Natural killer cell (primary cell): ENCODE measurements at regions of chr2 and their contacts with region 1.

Region 1: DNA sequence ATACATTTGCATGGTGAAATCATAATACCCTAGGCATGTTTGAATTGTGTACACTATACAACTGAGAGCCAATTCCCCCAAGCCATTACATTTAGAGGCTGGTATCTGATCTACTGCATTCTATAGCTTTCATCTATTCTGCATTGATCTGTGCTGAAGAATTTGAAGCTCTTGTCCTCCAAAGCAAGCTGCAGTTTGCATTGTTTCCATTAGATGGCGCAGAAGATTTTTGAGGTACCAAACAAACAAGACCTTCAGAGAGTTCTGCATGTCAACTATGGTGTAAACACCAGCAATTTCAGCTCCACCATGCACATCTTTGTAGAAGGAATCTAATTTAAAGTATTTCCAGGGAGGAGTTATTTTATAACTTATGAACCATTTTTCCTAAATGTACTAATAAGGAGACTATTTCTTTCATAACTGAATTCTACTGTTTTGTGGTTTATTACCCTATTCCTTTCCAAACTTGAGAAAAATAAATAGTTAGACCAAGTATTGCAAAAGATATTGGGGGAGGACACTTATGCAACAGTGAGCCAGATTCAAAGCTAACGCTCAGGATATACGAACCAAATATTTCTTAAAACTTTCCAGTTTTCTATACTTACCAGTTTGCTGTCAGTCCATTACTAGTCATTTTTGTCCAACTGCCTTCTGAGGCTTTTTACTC is 761.8 kb upstream of the ACVR2A start:
- DNase-seq: peak; percentile 17 to 73
- ATAC-seq: peak; percentile 49 to 54 (median 52)
- H3K4me3 ChIP-seq: no peak overlapping the region
- H3K4me3 Mint-ChIP-seq: no peak overlapping the region
- H3K27ac ChIP-seq: no peak overlapping the region
- H3K27ac Mint-ChIP-seq: no peak overlapping the region
- H3K4me1 ChIP-seq: no peaks in the 10 kb centered on the region
- H3K4me1 Mint-ChIP-seq: no peaks in the 10 kb centered on the region
- H3K27me3 ChIP-seq: peaks cover 2% of the 10 kb centered on the region
- H3K27me3 Mint-ChIP-seq: peaks cover 6 to 34% of the 10 kb centered on the region in 2 donors
- CTCF ChIP-seq: peak; percentile 85

Region 2: GRCh38 chr2:147331790-147332419 is 248.9 kb after region 1 on chr2:
- intact Hi-C with region 1: loop called (anchors 2 kb)
- DNase-seq: peak in 1 of 2 donors; percentile 65
- ATAC-seq: no peak
- H3K4me3 ChIP-seq: no peak overlapping the region
- H3K4me3 Mint-ChIP-seq: no peak overlapping the region
- H3K27ac ChIP-seq: no peak overlapping the region
- H3K27ac Mint-ChIP-seq: no peak overlapping the region
- H3K4me1 ChIP-seq: no peaks in the 10 kb centered on the region
- H3K4me1 Mint-ChIP-seq: peaks cover 10 to 11% of the 10 kb centered on the region in 2 donors
- H3K27me3 ChIP-seq: no peaks in the 10 kb centered on the region
- H3K27me3 Mint-ChIP-seq: peaks cover 0 to 8% of the 10 kb centered on the region in 2 donors
- CTCF ChIP-seq: peak; percentile 5

Region 3: GRCh38 chr2:147463881-147464520 is 381.0 kb after region 1 on chr2:
- intact Hi-C with region 1: no loop called
- DNase-seq: no peak
- ATAC-seq: no peak
- H3K4me3 ChIP-seq: no peak overlapping the region
- H3K4me3 Mint-ChIP-seq: no peak overlapping the region
- H3K27ac ChIP-seq: no peak overlapping the region
- H3K27ac Mint-ChIP-seq: no peak overlapping the region
- H3K4me1 ChIP-seq: no peaks in the 10 kb centered on the region
- H3K4me1 Mint-ChIP-seq: peaks cover 0 to 7% of the 10 kb centered on the region in 2 donors
- H3K27me3 ChIP-seq: no peaks in the 10 kb centered on the region
- H3K27me3 Mint-ChIP-seq: no peaks in the 10 kb centered on the region
- CTCF ChIP-seq: no peak